ENCODE measurements at regions of chr3 and their contacts with region 1.

Region 1: DNA sequence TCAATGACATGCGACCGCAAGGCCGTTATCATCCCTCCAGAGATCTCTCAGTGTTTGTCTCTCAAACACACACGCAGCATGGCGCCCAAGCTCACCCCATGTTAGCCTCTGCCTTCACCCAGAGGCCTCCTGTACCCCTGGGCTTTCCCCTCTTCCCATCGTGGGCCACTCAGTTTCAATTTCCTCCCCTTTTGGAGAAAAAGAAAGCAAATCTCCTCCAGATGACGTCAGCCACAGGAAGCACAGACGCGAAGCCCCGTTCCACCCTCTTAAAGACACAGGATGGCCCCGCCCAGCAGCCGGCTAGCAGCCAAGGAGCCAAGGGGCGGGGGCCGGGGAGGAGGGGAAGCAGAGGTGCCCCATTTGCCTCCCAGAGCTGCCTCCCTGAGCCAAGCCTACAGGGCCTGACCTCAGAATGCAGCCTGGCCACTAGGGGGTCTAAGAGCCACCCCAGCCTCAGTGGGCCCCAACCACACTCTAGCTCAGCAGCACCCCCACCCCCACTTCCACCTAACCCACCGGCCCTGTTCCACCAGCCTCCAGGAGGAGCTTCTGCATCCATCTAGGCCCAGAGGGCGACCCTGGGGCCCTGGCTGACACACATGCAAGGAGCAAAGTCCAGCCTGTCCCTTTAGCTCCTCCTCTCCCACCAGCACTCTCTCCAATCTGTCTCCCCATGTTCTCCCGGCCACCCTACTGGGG is 26.5 kb downstream of the ATRIP start:
- DNase-seq: peak; percentile 99
- H3K4me3 Mint-ChIP-seq: peak overlapping the region; percentile 78
- H3K27ac Mint-ChIP-seq: peak overlapping the region; percentile 97
- H3K4me1 Mint-ChIP-seq: peaks cover 55% of the 10 kb centered on the region
- H3K27me3 Mint-ChIP-seq: no peaks in the 10 kb centered on the region

Region 2: DNA sequence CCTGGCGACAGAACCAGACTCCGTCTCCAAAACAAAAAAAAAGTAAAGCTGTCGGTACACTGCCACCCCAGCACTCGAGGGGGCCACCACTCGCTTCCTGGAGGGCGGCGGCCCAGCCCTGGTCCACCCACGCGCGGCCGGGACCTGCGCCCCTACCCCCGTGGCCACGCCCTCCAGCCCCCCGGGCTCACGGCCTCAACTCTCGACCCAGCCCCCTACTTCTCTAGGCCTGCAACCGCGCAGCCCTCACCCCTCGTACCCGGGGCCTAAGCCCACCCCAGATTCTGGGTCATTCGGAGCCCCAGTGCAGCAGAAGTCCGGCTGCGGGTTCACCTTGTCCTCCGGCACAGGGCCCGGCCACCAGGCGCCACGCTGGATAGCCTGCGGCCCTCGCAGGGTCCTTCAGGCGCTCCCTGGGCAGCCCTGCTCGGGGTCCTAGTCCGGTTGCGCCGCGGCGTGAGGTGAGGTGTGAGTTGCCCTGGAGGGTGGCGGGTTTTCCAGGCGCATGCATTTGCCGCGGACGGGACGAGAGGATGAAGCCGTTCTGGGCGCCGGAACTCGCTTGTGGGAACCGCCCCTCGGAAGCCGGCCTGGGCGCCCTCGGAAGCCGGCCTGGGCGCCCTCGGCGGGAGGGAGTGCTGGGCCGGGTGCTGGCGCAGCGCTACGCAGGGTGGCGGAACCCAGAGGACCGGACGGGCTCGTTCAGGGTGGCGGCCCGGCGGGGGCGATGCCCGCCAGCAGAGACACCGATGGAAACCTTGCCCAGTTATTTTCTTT is 171.9 kb before region 1 on chr3:
- CTCF ChIA-PET with region 1: no interaction called
- intact Hi-C with region 1: loop called (anchors 1 kb)
- DNase-seq: peak; percentile 94
- H3K4me3 Mint-ChIP-seq: peak within 1 kb of the TSS; percentile 94
- H3K27ac Mint-ChIP-seq: peak within 1 kb of the TSS; percentile 96
- H3K4me1 Mint-ChIP-seq: peaks cover 28% of the 10 kb centered on the region
- H3K27me3 Mint-ChIP-seq: no peaks in the 10 kb centered on the region

Region 3: GRCh38 chr3:48548729-48549705 is 76.0 kb after region 1 on chr3:
- CTCF ChIA-PET with region 1: interaction called, 18 read pairs
- intact Hi-C with region 1: no loop called
- DNase-seq: peak; percentile 93
- H3K4me3 Mint-ChIP-seq: no peak overlapping the region
- H3K27ac Mint-ChIP-seq: no peak overlapping the region
- H3K4me1 Mint-ChIP-seq: peaks cover 4% of the 10 kb centered on the region
- H3K27me3 Mint-ChIP-seq: no peaks in the 10 kb centered on the region

Region 4: GRCh38 chr3:48635222-48636021 is 162.4 kb after region 1 on chr3 and contains the start of gene SLC26A6:
- CTCF ChIA-PET with region 1: interaction called, 3 read pairs
- intact Hi-C with region 1: loop called (anchors 2 kb)
- DNase-seq: peak; percentile 97
- H3K4me3 Mint-ChIP-seq: peak within 1 kb of the TSS; percentile 89
- H3K27ac Mint-ChIP-seq: peak within 1 kb of the TSS; percentile 69
- H3K4me1 Mint-ChIP-seq: peaks cover 18% of the 10 kb centered on the region
- H3K27me3 Mint-ChIP-seq: no peaks in the 10 kb centered on the region
- total RNA-seq, gene SLC26A6: 24.3 to 24.7 TPM

Region 5: GRCh38 chr3:49021813-49022687 is 549.0 kb after region 1 on chr3 and contains the start of gene NDUFAF3:
- CTCF ChIA-PET with region 1: no interaction called
- intact Hi-C with region 1: no loop called
- DNase-seq: peak; percentile 95
- H3K4me3 Mint-ChIP-seq: peak within 1 kb of the TSS; percentile 96
- H3K27ac Mint-ChIP-seq: peak within 1 kb of the TSS; percentile 97
- H3K4me1 Mint-ChIP-seq: peaks cover 60% of the 10 kb centered on the region
- H3K27me3 Mint-ChIP-seq: no peaks in the 10 kb centered on the region
- total RNA-seq, gene NDUFAF3: 113 to 115 TPM